Colonic mucosa (tissue), 4 donors: ENCODE measurements at regions of chr7 and their contacts with region 1.

Region 1: GRCh38 chr7:129471402-129471827 is 30.9 kb upstream of the SMKR1 start:
- DNase-seq: no peak
- H3K4me3 ChIP-seq: no peak overlapping the region
- H3K27ac ChIP-seq: no peak overlapping the region
- H3K4me1 ChIP-seq: no peaks in the 10 kb centered on the region
- H3K27me3 ChIP-seq: no peaks in the 10 kb centered on the region
- CTCF ChIP-seq: no peak

Region 2: DNA sequence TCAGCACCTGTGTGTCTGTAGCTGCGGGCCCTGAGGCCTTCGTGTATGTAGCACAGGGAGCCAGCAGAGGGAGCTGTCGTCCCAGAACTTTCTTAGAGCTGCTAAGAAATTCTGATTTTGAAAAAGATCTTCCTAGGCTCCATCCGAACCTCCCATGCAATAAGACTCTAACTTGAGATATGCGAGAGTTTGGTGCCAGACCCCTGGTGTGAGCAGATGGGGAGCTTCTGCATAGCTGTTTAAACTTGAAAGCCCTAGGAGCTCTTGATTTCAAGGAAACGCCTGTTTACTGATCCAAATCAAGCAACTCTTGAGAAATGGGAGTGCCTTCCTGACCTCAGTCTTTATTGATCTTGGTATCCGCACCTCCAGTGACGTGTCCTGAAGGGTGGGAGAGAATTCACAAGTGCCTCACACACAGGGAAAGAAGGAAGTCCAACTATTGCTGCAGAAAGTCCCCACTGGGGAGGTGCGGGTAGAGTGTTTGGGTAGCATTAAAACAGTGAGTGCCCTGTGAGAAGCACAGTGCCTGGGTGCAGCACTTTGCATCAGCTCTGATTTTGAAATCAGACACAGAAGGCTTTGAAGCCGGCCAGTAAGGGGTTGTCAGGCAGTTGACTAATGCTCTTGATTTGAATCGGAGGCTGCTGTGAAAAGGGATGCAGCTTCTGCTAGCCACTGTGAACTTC is 103.6 kb before region 1 on chr7:
- intact Hi-C with region 1: loop called (anchors 5 kb)
- DNase-seq: peak; percentile 91
- H3K4me3 ChIP-seq: peak overlapping the region; percentile 18
- H3K27ac ChIP-seq: peak overlapping the region; percentile 80
- H3K4me1 ChIP-seq: no peaks in the 10 kb centered on the region
- H3K27me3 ChIP-seq: no peaks in the 10 kb centered on the region
- CTCF ChIP-seq: peak; percentile 89